ENCODE measurements at regions of chr11 and their contacts with region 1.

Region 1: GRCh38 chr11:207208-207862 is at the starts of genes BET1L and RIC8A:
- DNase-seq: peak; percentile 95 to 99 (median 98)
- H3K4me3 ChIP-seq: peak within 1 kb of the TSS; percentile 95 to 100
- H3K4me3 Mint-ChIP-seq: peak within 1 kb of the TSS; percentile 94 to 100 (median 99)
- H3K27ac ChIP-seq: peak within 1 kb of the TSS; percentile 98
- H3K27ac Mint-ChIP-seq: peak within 1 kb of the TSS; percentile 99 to 100 (median 99)
- H3K4me1 ChIP-seq: peaks cover 55% of the 10 kb centered on the region
- H3K4me1 Mint-ChIP-seq: peaks cover 22 to 73% (median 50%) of the 10 kb centered on the region in 4 donors
- H3K27me3 ChIP-seq: no peaks in the 10 kb centered on the region
- H3K27me3 Mint-ChIP-seq: no peaks in the 10 kb centered on the region
- total RNA-seq, gene BET1L: 122 to 129 TPM
- total RNA-seq, gene RIC8A: 96.7 to 111 TPM

Region 2: GRCh38 chr11:250740-251299 is 43.5 kb after region 1 on chr11:
- CTCF ChIA-PET with region 1: interaction called, 14 read pairs
- POLR2A ChIA-PET with region 1: interaction called, 10 read pairs
- intact Hi-C with region 1: no loop called
- DNase-seq: peak; percentile 75 to 84 (median 81)
- H3K4me3 ChIP-seq: no peak overlapping the region
- H3K4me3 Mint-ChIP-seq: no peak overlapping the region
- H3K27ac ChIP-seq: peak overlapping the region; percentile 8
- H3K27ac Mint-ChIP-seq: peak overlapping the region; percentile 71 to 91 (median 81)
- H3K4me1 ChIP-seq: peaks cover 5% of the 10 kb centered on the region
- H3K4me1 Mint-ChIP-seq: peaks cover 6 to 9% (median 7%) of the 10 kb centered on the region in 4 donors
- H3K27me3 ChIP-seq: no peaks in the 10 kb centered on the region
- H3K27me3 Mint-ChIP-seq: no peaks in the 10 kb centered on the region

Region 3: GRCh38 chr11:288328-289144 is 81.2 kb after region 1 on chr11 and contains the start of gene PGGHG:
- CTCF ChIA-PET with region 1: interaction called, 3 read pairs
- POLR2A ChIA-PET with region 1: interaction called, 53 read pairs
- intact Hi-C with region 1: no loop called
- DNase-seq: peak in 3 of 5 donors; percentile 49 to 60 (median 51)
- H3K4me3 ChIP-seq: peak within 1 kb of the TSS; percentile 83 to 95
- H3K4me3 Mint-ChIP-seq: peak within 1 kb of the TSS; percentile 88 to 99 (median 98)
- H3K27ac ChIP-seq: peak within 1 kb of the TSS; percentile 96
- H3K27ac Mint-ChIP-seq: peak within 1 kb of the TSS; percentile 95 to 100 (median 98)
- H3K4me1 ChIP-seq: peaks cover 38% of the 10 kb centered on the region
- H3K4me1 Mint-ChIP-seq: peaks cover 14 to 51% (median 31%) of the 10 kb centered on the region in 4 donors
- H3K27me3 ChIP-seq: no peaks in the 10 kb centered on the region
- H3K27me3 Mint-ChIP-seq: no peaks in the 10 kb centered on the region
- total RNA-seq, gene PGGHG: 304 TPM

Region 4: GRCh38 chr11:355581-356458 is 148.5 kb after region 1 on chr11:
- CTCF ChIA-PET with region 1: no interaction called
- POLR2A ChIA-PET with region 1: interaction called, 12 read pairs
- intact Hi-C with region 1: loop called (anchors 1 kb)
- DNase-seq: peak; percentile 85 to 90 (median 86)
- H3K4me3 ChIP-seq: peak overlapping the region in 1 of 2 donors; percentile 59
- H3K4me3 Mint-ChIP-seq: peak overlapping the region; percentile 77 to 91 (median 84)
- H3K27ac ChIP-seq: peak overlapping the region; percentile 89
- H3K27ac Mint-ChIP-seq: peak overlapping the region in 6 of 7 donors; percentile 96 to 99 (median 97)
- H3K4me1 ChIP-seq: peaks cover 20% of the 10 kb centered on the region
- H3K4me1 Mint-ChIP-seq: peaks cover 7 to 50% (median 29%) of the 10 kb centered on the region in 4 donors
- H3K27me3 ChIP-seq: no peaks in the 10 kb centered on the region
- H3K27me3 Mint-ChIP-seq: no peaks in the 10 kb centered on the region

Region 5: DNA sequence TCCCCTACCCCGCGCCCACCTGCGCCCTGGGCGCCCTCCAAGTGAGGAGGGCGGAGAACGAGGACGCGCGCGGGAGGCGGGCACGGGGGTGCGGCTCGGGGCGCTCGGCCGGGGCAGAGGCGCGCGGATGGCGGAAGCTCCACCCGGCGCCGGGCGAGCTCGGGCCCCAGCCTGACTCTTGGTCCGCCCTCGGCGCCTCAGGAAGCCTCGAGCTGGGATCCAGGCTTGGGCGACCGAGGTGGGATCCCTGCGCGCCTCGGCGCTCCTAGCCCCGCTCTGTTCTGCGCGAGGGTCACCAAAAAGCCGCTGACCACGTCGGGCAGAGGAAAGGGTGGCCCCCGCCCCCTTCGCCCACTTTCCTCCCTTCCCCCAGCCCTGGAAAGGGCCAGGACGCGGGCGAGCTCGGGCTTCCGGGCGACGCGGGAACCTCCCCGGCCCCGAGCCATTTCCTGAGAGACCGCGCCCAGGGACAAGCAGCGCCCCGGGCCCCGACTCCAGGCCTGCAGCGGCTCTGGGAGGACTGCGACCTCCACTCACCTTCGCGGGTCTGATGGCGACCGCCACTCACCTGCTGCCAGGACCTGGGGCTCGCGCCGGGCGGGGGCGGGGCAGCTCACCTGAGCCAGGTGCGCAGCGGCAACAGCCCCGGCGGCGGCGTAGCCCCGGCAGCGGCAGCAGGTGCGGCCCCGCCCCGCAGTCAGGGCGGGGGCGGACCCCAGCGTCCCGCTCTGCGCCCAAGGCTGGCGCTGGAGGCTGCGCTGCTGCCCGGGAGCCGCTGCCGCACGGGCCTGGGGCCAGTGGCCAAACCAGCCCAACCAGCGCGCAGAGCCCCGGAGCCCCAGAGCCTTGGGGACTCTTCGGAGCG is 209.7 kb after region 1 on chr11:
- CTCF ChIA-PET with region 1: no interaction called
- POLR2A ChIA-PET with region 1: interaction called, 35 read pairs
- intact Hi-C with region 1: no loop called
- DNase-seq: peak in 4 of 5 donors; percentile 38 to 54 (median 45)
- H3K4me3 ChIP-seq: peak overlapping the region; percentile 17 to 73
- H3K4me3 Mint-ChIP-seq: peak overlapping the region; percentile 26 to 100 (median 96)
- H3K27ac ChIP-seq: peak overlapping the region; percentile 61
- H3K27ac Mint-ChIP-seq: peak overlapping the region in 4 of 7 donors; percentile 70 to 92 (median 83)
- H3K4me1 ChIP-seq: peaks cover 31% of the 10 kb centered on the region
- H3K4me1 Mint-ChIP-seq: peaks cover 4 to 42% (median 17%) of the 10 kb centered on the region in 4 donors
- H3K27me3 ChIP-seq: no peaks in the 10 kb centered on the region
- H3K27me3 Mint-ChIP-seq: no peaks in the 10 kb centered on the region

Measured in CD4-positive, alpha-beta memory T cell (primary cell).